ENCODE measurements at regions of chr9 and their contacts with region 1.

Region 1: GRCh38 chr9:36400332-36401163 is 479 bp upstream of the RNF38 start:
- DNase-seq: peak; percentile 87 to 92
- ATAC-seq: peak; percentile 91 to 97 (median 94)
- H3K4me3 ChIP-seq: peak overlapping the region; percentile 70 to 94 (median 82)
- H3K27ac ChIP-seq: peak overlapping the region; percentile 83 to 94 (median 90)
- H3K4me1 ChIP-seq: peaks cover 0 to 50% (median 30%) of the 10 kb centered on the region in 9 donors
- H3K27me3 ChIP-seq: no peaks in the 10 kb centered on the region
- CTCF ChIP-seq: peak in 4 of 9 donors; percentile 16 to 41 (median 32)

Region 2: GRCh38 chr9:36487482-36488388 is 87.2 kb after region 1 on chr9:
- intact Hi-C with region 1: loop called in 3 of 10 experiments (anchors 10 kb)
- DNase-seq: peak; percentile 91 to 92
- ATAC-seq: peak; percentile 97 to 99 (median 98)
- H3K4me3 ChIP-seq: peak overlapping the region; percentile 40 to 98 (median 78)
- H3K27ac ChIP-seq: peak overlapping the region; percentile 85 to 97 (median 94)
- H3K4me1 ChIP-seq: peaks cover 0 to 37% (median 26%) of the 10 kb centered on the region in 9 donors
- H3K27me3 ChIP-seq: no peaks in the 10 kb centered on the region
- CTCF ChIP-seq: peak in 3 of 9 donors; percentile 7 to 35 (median 15)

Measured in heart right ventricle (tissue), 16 donors.